Left cardiac atrium (tissue), 4 donors: ENCODE measurements at regions of chr11 and their contacts with region 1.

Region 1: DNA sequence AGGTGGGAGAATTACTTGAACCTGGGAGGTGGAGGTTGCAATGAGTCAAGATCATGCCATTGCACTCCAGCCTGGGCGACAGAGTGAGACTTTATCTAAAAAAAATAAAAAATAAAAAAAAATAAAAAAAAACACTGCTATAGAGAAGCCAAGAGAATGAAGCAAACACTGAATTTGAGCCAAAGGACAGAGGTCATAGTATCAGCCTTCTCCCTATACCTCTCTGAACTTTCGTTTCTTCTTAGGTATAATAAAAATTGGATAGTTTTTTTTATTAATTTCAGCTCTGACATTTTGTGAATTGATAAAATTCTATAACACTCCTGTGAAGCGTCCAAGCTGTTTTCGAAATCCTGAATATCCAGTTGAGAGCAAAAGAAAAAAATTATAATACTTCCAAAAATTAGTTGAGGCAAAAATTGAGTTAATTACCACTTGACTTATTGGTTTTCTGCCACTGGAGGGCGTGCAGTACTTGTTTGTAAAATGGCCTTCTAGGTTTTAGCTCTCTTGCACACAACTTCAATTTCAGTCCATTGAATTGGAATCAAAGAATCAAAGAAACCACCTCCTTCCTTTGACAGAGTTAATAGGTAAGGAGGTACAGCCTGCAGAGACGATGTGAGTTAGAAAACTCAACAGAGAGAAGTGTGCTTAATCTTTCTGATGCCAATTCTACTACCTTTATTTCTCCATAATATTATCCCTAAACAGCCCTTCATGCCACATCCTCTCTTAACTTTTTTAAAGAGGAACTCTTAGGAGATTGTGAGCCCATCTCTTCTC is 143.2 kb downstream of the BBOX1 start:
- DNase-seq: peak; percentile 46
- ATAC-seq: peak; percentile 60 to 72

Region 2: GRCh38 chr11:27296497-27296896 is 112.6 kb after region 1 on chr11:
- intact Hi-C with region 1: loop called (anchors 5 to 10 kb)
- DNase-seq: no peak
- ATAC-seq: peak in 1 of 2 donors; percentile 80

Region 3: GRCh38 chr11:27353593-27354358 is 169.9 kb after region 1 on chr11:
- intact Hi-C with region 1: loop called in 1 of 2 experiments (anchors 10 kb)
- DNase-seq: no peak
- ATAC-seq: peak in 1 of 2 donors; percentile 31

Region 4: DNA sequence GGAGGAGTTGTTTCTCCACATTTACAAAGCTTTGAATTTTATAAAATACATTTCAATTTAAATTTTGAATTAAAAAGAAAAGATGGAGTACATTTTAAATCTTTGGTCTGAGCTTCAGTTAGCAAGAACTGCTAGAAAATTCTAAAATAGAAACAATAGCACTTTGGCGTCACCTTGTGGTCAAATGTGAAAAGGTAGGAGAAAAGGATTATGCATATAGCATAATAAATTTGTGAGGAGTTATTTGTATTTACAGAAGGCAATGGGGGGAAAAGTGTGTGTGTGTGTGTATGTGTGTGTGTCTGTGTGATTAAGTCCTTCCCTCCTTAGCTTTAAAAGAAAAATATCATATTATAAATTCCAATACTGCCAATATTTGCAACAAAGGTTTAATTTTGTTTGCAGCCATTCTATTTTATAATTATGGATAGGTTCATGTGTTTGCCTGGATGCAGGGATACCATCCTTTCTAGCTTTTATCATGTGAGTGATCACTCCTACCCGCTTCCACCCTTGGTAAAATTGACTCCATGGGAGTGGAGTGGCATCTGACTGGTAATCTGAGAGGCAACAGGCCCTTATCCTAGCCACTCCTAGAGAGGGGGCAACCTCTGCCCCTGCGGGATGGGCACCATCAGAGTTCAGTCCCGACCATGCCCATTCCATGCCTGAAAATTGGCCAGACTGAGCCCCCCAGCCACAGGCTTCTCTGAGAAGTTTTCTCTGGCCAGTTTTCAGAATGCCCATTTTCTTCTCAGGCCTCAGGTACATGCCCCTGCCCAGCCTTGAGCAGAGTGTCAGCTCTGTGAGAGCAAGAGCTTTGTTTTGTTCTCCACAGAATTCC is 302.3 kb after region 1 on chr11:
- intact Hi-C with region 1: loop called (anchors 2 to 5 kb)
- DNase-seq: no peak
- ATAC-seq: peak; percentile 17 to 47